Right ventricle myocardium inferior (tissue), 1 donor: ENCODE measurements at regions of chr4 and their contacts with region 1.

Region 1: DNA sequence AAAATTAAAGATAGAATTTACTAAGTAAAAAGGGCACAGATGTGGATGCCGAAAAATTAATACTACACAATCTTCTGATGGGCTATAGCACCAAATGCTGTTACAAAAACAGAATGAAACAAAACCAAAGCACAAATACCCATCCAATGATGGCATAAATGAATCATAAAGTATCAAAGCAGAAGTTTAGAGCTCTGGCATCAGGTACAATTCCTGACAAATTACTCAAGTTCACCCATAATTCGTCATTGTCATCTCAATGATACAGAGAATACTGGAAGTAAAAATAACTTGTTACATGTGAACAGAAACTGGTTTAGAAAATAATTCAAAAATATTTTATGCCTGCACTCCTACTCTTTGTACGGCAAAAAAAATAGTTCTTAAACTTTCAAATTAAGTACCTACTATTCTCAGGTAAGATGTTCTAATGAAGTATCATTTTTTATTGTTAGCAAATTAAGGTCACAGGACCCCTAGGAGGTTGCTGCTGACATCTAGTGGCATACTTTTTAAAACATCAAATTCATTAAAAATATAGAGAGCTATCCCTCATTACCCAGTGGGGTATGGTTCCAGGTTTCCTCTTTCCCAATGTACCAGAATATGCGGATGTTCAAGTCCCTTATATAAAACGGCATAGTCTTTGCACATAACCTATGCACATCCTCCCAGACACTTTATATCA is 126.1 kb downstream of the INPP4B start:
- DNase-seq: no peak
- ATAC-seq: no peak

Region 2: DNA sequence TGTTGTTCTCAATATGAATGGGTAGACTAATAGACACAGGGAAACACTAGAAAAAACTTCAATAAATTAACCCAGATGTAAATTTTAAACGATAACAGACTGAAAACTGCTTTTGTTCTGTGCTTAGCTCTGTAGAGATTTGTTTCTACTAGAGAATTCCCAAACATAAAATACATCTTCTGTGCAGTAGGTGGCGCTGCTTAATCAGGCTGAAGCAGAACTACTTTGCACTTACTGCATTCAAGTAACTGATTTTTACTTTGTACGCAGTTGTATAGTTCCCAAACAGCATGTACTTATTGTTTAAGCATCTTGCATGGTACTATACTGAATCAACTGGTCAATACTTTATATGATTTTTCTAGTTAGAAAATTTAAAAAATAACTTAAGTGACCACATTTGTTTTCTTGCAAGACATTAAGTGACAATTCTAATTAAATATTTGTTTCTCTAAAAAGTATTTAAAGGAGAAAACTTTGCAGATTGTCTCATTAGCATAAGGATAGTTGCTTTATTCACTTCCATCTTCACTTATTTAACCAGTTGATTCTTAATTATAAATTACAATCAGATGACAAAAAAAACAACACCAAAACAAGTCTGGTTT is 593.0 kb before region 1 on chr4:
- intact Hi-C with region 1: loop called (anchors 2 kb)
- DNase-seq: no peak
- ATAC-seq: peak; percentile 34

Region 3: GRCh38 chr4:142282870-142283431 is 437.0 kb before region 1 on chr4:
- intact Hi-C with region 1: loop called (anchors 10 kb)
- DNase-seq: no peak
- ATAC-seq: no peak

Region 4: GRCh38 chr4:142353149-142353738 is 366.8 kb before region 1 on chr4:
- intact Hi-C with region 1: loop called (anchors 5 kb)
- DNase-seq: no peak
- ATAC-seq: no peak

Region 5: GRCh38 chr4:142778430-142778829 is 58.4 kb after region 1 on chr4:
- intact Hi-C with region 1: no loop called
- DNase-seq: no peak
- ATAC-seq: no peak